ENCODE measurements at regions of chr14 and their contacts with region 1.

Region 1: DNA sequence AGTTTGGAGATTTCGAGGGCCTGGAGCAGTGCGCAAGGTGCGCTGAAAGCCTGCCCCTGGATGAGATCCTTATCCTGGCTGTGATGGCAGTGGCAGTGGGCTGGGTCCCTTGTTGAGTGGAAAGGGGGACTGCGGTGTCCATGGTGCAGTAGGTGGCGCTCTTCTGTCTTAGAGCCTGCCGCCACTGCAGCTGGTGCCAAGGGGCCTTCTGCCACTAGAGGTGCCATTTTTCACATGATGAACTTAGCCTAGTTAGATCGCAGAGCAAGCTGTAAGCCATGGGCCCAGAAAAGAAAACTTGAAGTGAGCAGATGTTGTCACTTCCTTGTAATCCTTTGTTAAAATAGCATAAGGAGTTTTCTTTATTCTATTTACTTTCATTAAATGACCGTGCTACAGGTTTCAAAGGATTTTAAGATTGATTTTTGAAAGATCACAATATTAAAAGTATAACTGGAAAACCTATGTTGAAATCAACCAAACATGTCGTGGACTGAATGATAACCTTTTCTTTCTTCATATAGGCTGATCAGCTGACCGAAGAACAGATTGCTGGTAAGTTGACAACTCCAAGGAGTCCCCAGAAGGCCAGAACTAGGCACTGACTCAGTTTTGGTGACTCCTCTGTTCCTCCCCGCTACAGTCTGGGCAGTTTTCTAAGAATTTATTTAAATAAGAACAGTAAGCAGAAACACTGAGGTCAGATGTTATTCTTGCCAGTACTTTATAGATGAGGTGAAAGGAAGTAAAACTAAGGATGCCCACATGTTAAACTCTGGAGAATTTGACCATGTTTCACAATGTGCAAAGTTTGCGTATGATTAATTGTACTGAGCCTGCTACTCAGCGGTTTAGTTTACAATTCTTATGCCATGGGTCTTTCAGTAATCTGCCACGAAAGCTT is 3.0 kb downstream of the CALM1 start:
- DNase-seq: peak; percentile 93 to 97 (median 94)
- H3K4me3 ChIP-seq: peak overlapping the region in 2 of 3 donors; percentile 64 to 71
- H3K27ac ChIP-seq: peak overlapping the region in 1 of 2 donors; percentile 25
- H3K4me1 ChIP-seq: peaks cover 0 to 22% (median 12%) of the 10 kb centered on the region in 3 donors
- H3K27me3 ChIP-seq: no peaks in the 10 kb centered on the region
- CTCF ChIP-seq: peak; percentile 99

Region 2: DNA sequence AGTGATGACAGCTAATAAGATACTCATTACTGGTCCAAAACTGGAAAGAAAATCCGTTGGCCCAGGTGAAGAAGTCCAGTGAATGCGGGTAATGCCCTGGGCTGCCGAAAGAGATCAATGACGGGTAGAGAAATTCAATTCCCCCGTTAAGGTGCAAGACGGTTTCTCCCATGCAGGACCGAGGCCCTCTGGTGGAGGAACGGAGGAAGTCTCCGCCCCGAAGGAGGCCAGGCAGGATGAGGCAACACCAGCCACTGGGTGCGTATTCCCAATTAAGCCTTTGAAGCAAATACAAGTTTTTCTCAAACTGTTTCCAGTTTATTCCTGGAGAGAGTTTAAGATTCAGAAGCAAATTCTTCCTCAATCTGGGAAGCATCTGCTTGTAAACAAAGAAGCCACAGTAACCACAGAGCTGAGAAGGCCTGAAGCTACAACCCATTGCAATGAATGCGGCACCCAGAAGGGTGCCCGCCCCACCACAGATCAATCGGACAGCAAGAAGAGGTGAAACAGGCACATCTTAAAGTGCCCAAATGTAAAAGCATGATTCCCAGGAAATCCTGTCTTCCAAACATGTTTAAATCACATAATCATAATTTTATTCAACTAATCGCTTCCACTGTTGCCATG is 297.9 kb after region 1 on chr14:
- intact Hi-C with region 1: loop called (anchors 10 kb)
- DNase-seq: peak; percentile 85 to 92 (median 88)
- H3K4me3 ChIP-seq: no peak overlapping the region
- H3K27ac ChIP-seq: no peak overlapping the region
- H3K4me1 ChIP-seq: peaks cover 0 to 11% (median 9%) of the 10 kb centered on the region in 3 donors
- H3K27me3 ChIP-seq: no peaks in the 10 kb centered on the region
- CTCF ChIP-seq: peak; percentile 80

Measured in kidney (tissue), 22 donors.